KBM-7 (cell line): ENCODE measurements at regions of chr2 and their contacts with region 1.

Region 1: DNA sequence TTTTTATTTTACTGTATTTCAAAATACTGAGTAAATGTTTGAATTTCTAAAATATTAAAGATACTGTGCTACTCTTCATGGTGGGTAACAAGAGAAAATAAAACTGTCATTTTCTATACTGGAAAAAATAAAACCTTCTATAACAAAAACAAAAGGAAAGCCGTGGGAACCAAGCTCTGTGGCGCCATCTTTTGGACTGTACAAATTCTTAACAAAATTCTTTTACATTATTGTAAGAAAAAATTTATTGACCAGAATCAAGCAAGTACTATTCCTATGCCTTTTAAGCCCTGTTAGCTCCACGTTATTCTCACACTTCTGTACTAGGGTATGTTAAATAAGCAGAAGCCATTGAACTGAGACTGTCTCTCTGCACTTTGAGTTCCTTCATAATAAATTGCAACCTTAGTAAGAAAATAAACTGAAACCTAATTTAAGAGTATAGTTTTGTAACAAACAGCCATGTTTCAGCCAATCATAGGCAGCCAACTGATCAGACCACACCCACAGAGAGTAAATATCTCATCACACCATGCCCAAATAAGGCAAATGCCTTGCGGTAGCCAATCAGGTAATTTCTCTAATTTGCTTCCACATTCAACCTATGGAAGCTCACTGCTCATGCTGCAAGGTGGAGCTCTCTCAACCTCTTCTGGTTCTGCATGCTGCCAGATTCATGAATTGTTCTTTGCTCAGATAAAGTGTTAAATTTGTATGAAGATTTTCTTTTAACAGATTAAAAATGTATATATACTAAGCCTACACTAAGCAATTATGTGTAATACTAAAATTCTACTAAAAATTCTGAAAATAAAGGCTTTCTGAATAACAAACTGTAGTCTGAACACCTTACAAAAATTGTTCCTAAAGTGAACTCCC is 42.2 kb downstream of the HIBCH start:
- DNase-seq: peak; percentile 45

Region 2: DNA sequence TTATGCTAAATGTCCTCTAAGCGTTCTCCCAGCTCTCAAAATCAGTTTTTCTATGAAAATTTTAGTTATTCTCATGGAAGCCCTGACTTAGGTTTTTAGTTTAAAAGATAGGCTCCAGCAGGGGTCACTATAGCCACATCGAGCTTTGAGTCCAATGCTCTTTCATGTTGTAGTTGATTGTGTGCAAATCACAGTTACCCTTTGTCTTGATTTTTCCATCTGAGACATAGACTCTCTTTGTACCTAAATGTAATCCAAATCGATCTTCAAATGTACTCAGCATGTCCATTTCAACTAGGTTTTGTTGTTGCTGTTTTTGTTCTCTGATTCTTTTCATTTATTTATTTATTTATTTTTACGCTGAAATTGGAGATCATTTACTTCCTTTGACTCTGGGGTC is 188.6 kb before region 1 on chr2:
- in situ Hi-C with region 1: loop called (anchors 25 kb)
- DNase-seq: peak; percentile 70